ENCODE measurements at regions of chr5 and their contacts with region 1.

Region 1: GRCh38 chr5:177516604-177517568 is at the start of gene DDX41:
- DNase-seq: peak; percentile 95 to 97 (median 95)
- H3K4me3 ChIP-seq: peak within 1 kb of the TSS; percentile 88 to 93
- H3K4me3 Mint-ChIP-seq: peak within 1 kb of the TSS; percentile 93 to 100 (median 96)
- H3K27ac ChIP-seq: peak within 1 kb of the TSS; percentile 71
- H3K27ac Mint-ChIP-seq: peak within 1 kb of the TSS; percentile 82 to 99 (median 95)
- H3K4me1 ChIP-seq: peaks cover 37% of the 10 kb centered on the region
- H3K4me1 Mint-ChIP-seq: peaks cover 31 to 62% (median 43%) of the 10 kb centered on the region in 4 donors
- H3K27me3 ChIP-seq: no peaks in the 10 kb centered on the region
- H3K27me3 Mint-ChIP-seq: no peaks in the 10 kb centered on the region
- total RNA-seq, gene DDX41: 72.9 to 80.3 TPM

Region 2: DNA sequence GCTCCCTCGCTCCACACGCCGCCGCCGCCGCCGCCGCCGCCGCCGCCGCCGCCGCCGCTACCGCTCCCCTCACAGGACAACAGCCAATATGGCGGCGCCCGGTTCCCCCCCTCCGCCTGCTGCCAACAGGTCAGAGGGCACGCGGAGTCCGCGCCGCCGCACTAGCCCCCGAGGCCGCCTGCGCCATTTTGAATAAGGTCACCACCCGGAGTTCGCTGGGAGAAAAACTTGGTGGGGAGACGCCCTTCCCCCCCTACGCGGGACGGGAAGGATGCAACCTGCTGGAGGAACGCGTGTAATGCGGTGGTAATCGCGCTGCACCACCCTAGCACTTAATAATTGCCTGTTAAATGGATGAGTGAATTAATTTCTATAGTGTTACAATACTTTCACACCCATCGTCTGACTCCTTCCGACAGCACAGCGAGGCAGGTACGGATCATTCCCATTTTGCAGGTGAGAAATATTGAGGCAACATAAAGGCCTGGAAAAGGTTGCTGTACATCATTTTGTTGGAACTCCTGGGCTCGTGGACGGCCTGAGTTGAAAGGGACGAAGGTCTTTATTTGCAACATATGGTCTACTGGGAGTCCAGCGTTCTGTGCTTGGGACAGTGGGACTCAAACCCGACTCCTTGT is 37.7 kb after region 1 on chr5 and contains the start of gene FAM193B:
- CTCF ChIA-PET with region 1: no interaction called
- POLR2A ChIA-PET with region 1: no interaction called
- intact Hi-C with region 1: loop called (anchors 1 kb)
- DNase-seq: peak; percentile 93 to 95 (median 94)
- H3K4me3 ChIP-seq: peak within 1 kb of the TSS; percentile 73
- H3K4me3 Mint-ChIP-seq: peak within 1 kb of the TSS; percentile 84 to 93 (median 90)
- H3K27ac ChIP-seq: peak within 1 kb of the TSS; percentile 67
- H3K27ac Mint-ChIP-seq: peak within 1 kb of the TSS; percentile 63 to 92 (median 82)
- H3K4me1 ChIP-seq: peaks cover 39% of the 10 kb centered on the region
- H3K4me1 Mint-ChIP-seq: peaks cover 23 to 54% (median 38%) of the 10 kb centered on the region in 4 donors
- H3K27me3 ChIP-seq: no peaks in the 10 kb centered on the region
- H3K27me3 Mint-ChIP-seq: no peaks in the 10 kb centered on the region
- total RNA-seq, gene FAM193B: 233 to 252 TPM

Region 3: DNA sequence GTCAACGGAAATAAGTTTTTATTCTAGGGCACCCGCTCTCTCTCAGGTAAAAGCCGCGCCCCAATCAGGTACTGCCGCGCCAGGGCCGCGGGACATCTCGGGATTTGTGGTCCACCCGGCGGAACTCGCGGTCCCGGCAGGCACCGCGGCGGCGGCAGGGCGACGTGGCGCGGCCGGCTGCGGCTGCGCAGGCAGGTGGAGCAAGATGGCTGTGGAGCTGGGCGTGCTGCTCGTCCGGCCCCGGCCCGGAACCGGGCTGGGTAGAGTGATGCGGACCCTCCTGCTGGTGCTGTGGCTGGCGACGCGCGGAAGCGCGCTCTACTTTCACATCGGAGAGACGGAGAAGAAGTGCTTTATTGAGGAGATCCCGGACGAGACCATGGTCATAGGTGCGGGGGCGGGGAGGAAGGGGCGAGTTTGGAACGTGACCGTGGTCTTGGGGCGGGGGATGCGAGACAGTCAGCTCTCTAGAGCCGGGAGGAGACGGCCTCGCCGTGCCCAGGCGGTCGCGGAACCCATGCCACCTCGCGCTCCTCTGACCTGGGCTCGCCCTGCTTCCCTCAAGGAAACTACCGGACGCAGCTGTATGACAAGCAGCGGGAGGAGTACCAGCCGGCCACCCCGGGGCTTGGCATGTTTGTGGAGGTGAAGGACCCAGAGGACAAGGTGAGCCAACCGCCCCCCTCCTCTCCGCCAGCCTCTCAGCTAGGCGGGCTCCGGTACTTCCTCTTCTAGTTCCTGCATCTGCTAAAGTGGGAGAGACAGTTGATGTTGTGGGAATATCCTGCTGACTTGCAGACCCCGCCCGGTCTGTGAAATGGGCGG is 75.3 kb after region 1 on chr5 and contains the start of gene TMED9:
- CTCF ChIA-PET with region 1: no interaction called
- POLR2A ChIA-PET with region 1: interaction called, 11 read pairs
- intact Hi-C with region 1: loop called (anchors 2 kb)
- DNase-seq: peak; percentile 88 to 91 (median 90)
- H3K4me3 ChIP-seq: peak within 1 kb of the TSS; percentile 97 to 98
- H3K4me3 Mint-ChIP-seq: peak within 1 kb of the TSS; percentile 96 to 100 (median 99)
- H3K27ac ChIP-seq: peak within 1 kb of the TSS; percentile 74
- H3K27ac Mint-ChIP-seq: peak within 1 kb of the TSS; percentile 91 to 99 (median 98)
- H3K4me1 ChIP-seq: peaks cover 26% of the 10 kb centered on the region
- H3K4me1 Mint-ChIP-seq: peaks cover 15 to 37% (median 26%) of the 10 kb centered on the region in 4 donors
- H3K27me3 ChIP-seq: no peaks in the 10 kb centered on the region
- H3K27me3 Mint-ChIP-seq: peaks cover 13 to 14% of the 10 kb centered on the region in 2 donors
- total RNA-seq, gene TMED9: 93.7 to 95.8 TPM

Region 4: GRCh38 chr5:177599731-177600507 is 83.0 kb after region 1 on chr5 and contains the start of gene B4GALT7:
- CTCF ChIA-PET with region 1: no interaction called
- POLR2A ChIA-PET with region 1: interaction called, 4 read pairs
- intact Hi-C with region 1: loop called (anchors 1 kb)
- DNase-seq: peak; percentile 72 to 85 (median 83)
- H3K4me3 ChIP-seq: peak within 1 kb of the TSS; percentile 79 to 87
- H3K4me3 Mint-ChIP-seq: peak within 1 kb of the TSS; percentile 92 to 99 (median 94)
- H3K27ac ChIP-seq: peak within 1 kb of the TSS; percentile 63
- H3K27ac Mint-ChIP-seq: peak within 1 kb of the TSS; percentile 85 to 99 (median 94)
- H3K4me1 ChIP-seq: peaks cover 29% of the 10 kb centered on the region
- H3K4me1 Mint-ChIP-seq: peaks cover 17 to 46% (median 34%) of the 10 kb centered on the region in 4 donors
- H3K27me3 ChIP-seq: no peaks in the 10 kb centered on the region
- H3K27me3 Mint-ChIP-seq: no peaks in the 10 kb centered on the region
- total RNA-seq, gene B4GALT7: 45.3 to 47.9 TPM